B cell (primary cell): ENCODE measurements at regions of chr16 and their contacts with region 1.

Region 1: DNA sequence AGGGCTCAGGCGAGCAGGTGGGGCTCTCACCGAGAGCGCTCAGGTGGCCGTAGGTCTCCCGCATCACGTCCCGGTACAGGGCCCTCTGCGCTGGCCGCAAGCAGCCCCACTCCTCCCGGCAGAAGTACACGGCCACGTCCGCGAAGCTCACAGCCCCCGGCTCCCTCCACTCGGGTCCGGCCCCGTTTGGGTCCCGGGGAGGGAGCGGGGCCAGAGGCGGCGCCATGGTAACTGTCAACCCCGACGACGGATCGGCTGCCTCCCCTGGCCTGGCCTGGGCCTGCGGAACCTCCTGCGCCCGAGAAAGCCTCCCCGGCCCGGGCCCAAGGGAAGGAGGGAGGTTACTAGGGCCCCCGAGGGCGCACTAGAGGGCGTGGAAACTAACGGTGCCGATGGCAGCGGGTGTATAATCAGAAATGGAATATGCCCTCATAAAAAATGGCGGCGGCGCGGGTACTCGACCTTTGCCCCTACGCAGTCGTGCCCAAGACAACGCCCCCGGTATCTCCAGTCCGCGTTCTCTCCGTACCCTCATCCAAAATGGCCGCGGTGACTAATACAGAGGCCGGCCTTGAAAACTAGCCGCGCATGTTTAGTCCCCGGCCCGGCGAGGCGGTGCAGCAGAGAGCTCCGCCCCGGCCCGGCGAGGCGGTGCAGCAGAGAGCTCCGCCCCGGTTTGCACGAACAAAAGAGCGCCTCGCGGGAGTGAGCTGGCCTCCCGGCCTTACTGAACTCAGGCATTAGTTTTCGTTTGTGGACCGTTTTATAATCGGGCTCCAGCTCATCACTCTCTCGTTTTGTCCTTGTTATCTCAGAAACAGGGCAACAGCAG is at the start of gene ZNF764:
- DNase-seq: peak; percentile 97
- ATAC-seq: peak; percentile 92
- H3K4me3 ChIP-seq: peak within 1 kb of the TSS in 4 of 5 experiments; percentile 80 to 91 (median 88)
- H3K4me3 Mint-ChIP-seq: peak within 1 kb of the TSS; percentile 86
- H3K27ac ChIP-seq: peak within 1 kb of the TSS; percentile 95 to 97
- H3K27ac Mint-ChIP-seq: peak within 1 kb of the TSS; percentile 91
- H3K4me1 ChIP-seq: peaks cover 14 to 35% of the 10 kb centered on the region in 2 donors
- H3K4me1 Mint-ChIP-seq: peaks cover 42% of the 10 kb centered on the region
- H3K27me3 ChIP-seq: no peaks in the 10 kb centered on the region
- H3K27me3 Mint-ChIP-seq: no peaks in the 10 kb centered on the region
- CTCF ChIP-seq: no peak
- total RNA-seq, gene ZNF764: 19.7 and 20.9 TPM in 2 replicates

Region 2: DNA sequence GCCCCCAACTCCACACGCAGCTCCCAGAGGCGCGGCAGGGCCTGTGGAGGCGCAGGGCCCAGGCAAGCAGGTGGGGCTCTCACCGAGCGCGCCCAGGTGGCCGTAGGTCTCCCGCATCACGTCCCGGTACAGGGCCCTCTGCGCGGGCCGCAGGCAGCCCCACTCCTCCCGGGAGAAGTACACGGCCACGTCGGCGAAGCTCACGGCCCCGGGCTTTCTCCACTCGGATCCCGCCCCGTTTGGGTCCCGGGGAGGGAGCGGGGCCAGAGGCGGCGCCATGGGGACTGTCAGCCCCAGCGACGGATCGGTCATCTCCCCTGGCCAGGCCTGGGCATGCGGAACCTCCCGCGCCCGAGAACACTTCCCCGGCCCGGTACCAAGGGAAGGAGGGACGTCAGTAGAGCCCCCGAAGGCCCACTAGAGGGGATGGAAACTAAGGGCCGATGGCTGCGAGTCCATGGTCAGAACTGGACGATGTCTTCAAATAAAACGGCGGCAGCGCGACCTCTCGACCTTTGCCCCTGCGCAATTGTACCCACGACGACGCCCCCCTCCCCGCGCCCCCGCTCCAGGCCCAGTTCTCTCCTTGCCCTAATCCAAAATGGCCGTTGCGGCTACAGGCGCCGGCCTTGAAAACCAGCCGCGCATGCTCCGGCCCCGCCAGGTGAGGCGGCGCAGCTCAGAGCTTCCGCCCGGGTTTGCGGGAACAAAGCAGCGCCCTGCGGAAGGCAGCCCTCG is 23.6 kb before region 1 on chr16 and contains the start of gene ZNF747:
- CTCF ChIA-PET with region 1: interaction called, 53 read pairs
- POLR2A ChIA-PET with region 1: interaction called, 38 read pairs
- intact Hi-C with region 1: loop called (anchors 1 kb)
- DNase-seq: peak; percentile 93
- ATAC-seq: peak; percentile 82
- H3K4me3 ChIP-seq: peak within 1 kb of the TSS; percentile 80 to 93 (median 88)
- H3K4me3 Mint-ChIP-seq: peak within 1 kb of the TSS; percentile 98
- H3K27ac ChIP-seq: peak within 1 kb of the TSS; percentile 89 to 94
- H3K27ac Mint-ChIP-seq: peak within 1 kb of the TSS; percentile 94
- H3K4me1 ChIP-seq: peaks cover 8 to 23% of the 10 kb centered on the region in 2 donors
- H3K4me1 Mint-ChIP-seq: peaks cover 33% of the 10 kb centered on the region
- H3K27me3 ChIP-seq: no peaks in the 10 kb centered on the region
- H3K27me3 Mint-ChIP-seq: no peaks in the 10 kb centered on the region
- CTCF ChIP-seq: no peak
- total RNA-seq, gene ZNF747: 17.3 and 27.1 TPM in 2 replicates

Region 3: DNA sequence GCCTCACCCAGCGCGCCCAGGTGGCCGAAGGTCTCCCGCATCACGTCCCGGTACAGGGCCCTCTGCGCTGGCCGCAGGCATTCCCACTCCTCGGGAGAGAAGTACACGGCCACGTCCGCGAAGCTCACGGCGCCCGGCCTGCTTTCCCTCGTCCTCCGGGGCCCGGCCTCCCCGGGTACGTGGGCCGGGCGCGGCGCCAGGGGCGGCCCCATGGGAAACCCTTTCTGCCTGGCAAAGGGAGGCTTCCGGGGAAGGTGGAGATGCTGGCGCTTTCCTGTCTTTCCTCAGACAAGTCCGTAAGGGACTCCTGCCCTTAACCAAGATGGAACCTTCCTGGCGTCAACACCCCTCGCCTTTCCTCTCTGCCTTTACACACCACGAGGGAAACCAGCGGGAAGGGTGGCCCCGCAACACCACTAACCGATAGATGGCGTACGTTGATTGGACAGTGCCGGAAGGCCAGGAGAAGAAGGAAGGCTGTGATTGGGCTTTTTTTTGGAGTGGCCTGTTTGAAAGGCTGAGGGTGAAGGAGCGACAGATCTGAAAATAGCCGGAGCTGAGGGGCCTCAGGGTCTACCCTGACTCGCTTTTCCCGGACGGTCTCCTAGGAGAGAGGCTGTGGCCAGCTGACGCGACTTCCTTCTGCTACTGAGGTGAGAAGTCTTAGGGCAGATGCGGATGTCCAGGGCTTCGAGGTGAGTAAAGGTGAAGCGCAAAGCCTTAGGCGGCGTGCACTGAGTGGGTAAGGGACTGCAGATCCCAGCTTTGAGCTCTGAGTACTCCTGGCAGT is 27.4 kb after region 1 on chr16 and contains the start of gene ZNF785:
- CTCF ChIA-PET with region 1: interaction called, 8 read pairs
- POLR2A ChIA-PET with region 1: interaction called, 4 read pairs
- intact Hi-C with region 1: loop called (anchors 1 kb)
- DNase-seq: peak; percentile 95
- ATAC-seq: peak; percentile 99
- H3K4me3 ChIP-seq: peak within 1 kb of the TSS; percentile 56 to 89 (median 75)
- H3K4me3 Mint-ChIP-seq: peak within 1 kb of the TSS; percentile 85
- H3K27ac ChIP-seq: peak within 1 kb of the TSS; percentile 29 to 82
- H3K27ac Mint-ChIP-seq: peak within 1 kb of the TSS; percentile 71
- H3K4me1 ChIP-seq: peaks cover 8 to 21% of the 10 kb centered on the region in 2 donors
- H3K4me1 Mint-ChIP-seq: peaks cover 22% of the 10 kb centered on the region
- H3K27me3 ChIP-seq: no peaks in the 10 kb centered on the region
- H3K27me3 Mint-ChIP-seq: no peaks in the 10 kb centered on the region
- CTCF ChIP-seq: no peak
- total RNA-seq, gene ZNF785: 39.7 and 44.6 TPM in 2 replicates

Region 4: GRCh38 chr16:30602616-30603277 is 44.6 kb after region 1 on chr16:
- CTCF ChIA-PET with region 1: interaction called, 15 read pairs
- POLR2A ChIA-PET with region 1: no interaction called
- intact Hi-C with region 1: loop called (anchors 1 kb)
- DNase-seq: no peak
- ATAC-seq: no peak
- H3K4me3 ChIP-seq: no peak overlapping the region
- H3K4me3 Mint-ChIP-seq: no peak overlapping the region
- H3K27ac ChIP-seq: no peak overlapping the region
- H3K27ac Mint-ChIP-seq: no peak overlapping the region
- H3K4me1 ChIP-seq: no peaks in the 10 kb centered on the region
- H3K4me1 Mint-ChIP-seq: peaks cover 3% of the 10 kb centered on the region
- H3K27me3 ChIP-seq: no peaks in the 10 kb centered on the region
- H3K27me3 Mint-ChIP-seq: no peaks in the 10 kb centered on the region
- CTCF ChIP-seq: no peak

Region 5: GRCh38 chr16:30609926-30610839 is 52.0 kb after region 1 on chr16 and contains the start of gene ZNF689:
- CTCF ChIA-PET with region 1: interaction called, 7 read pairs
- POLR2A ChIA-PET with region 1: interaction called, 6 read pairs
- intact Hi-C with region 1: loop called (anchors 1 kb)
- DNase-seq: peak; percentile 97
- ATAC-seq: peak; percentile 88
- H3K4me3 ChIP-seq: peak within 1 kb of the TSS; percentile 84 to 98 (median 91)
- H3K4me3 Mint-ChIP-seq: peak within 1 kb of the TSS; percentile 98
- H3K27ac ChIP-seq: peak within 1 kb of the TSS; percentile 82 to 96
- H3K27ac Mint-ChIP-seq: peak within 1 kb of the TSS; percentile 96
- H3K4me1 ChIP-seq: peaks cover 14 to 24% of the 10 kb centered on the region in 2 donors
- H3K4me1 Mint-ChIP-seq: peaks cover 21% of the 10 kb centered on the region
- H3K27me3 ChIP-seq: no peaks in the 10 kb centered on the region
- H3K27me3 Mint-ChIP-seq: no peaks in the 10 kb centered on the region
- CTCF ChIP-seq: no peak
- total RNA-seq, gene ZNF689: 11.9 and 12.4 TPM in 2 replicates

Region 6: DNA sequence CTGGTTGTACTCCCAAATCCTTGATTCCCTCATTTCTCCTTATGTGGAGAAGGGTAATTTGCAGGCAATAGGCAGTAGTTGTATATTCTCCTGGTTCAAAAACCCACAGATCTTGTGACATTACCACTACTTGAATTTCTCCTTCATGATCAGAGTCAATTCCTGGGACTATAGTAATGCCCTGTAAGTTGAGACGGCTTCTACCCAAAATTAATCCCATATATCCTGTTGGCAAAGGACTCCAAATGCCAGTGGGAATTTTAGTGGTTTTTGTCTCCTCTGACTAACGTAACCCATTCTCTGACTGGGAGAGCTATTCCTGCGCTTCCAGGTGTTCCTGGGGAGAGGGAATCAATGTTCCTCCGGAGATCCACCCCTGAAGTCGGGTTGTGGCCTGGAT is 63.6 kb after region 1 on chr16:
- CTCF ChIA-PET with region 1: no interaction called
- POLR2A ChIA-PET with region 1: no interaction called
- intact Hi-C with region 1: no loop called
- DNase-seq: no peak
- ATAC-seq: no peak
- H3K4me3 ChIP-seq: no peak overlapping the region
- H3K4me3 Mint-ChIP-seq: no peak overlapping the region
- H3K27ac ChIP-seq: no peak overlapping the region
- H3K27ac Mint-ChIP-seq: no peak overlapping the region
- H3K4me1 ChIP-seq: no peaks in the 10 kb centered on the region
- H3K4me1 Mint-ChIP-seq: no peaks in the 10 kb centered on the region
- H3K27me3 ChIP-seq: no peaks in the 10 kb centered on the region
- H3K27me3 Mint-ChIP-seq: peaks cover 21% of the 10 kb centered on the region
- CTCF ChIP-seq: no peak

Region 7: GRCh38 chr16:30747799-30748634 is 189.8 kb after region 1 on chr16 and contains the start of gene PHKG2:
- CTCF ChIA-PET with region 1: no interaction called
- POLR2A ChIA-PET with region 1: no interaction called
- intact Hi-C with region 1: loop called (anchors 2 kb)
- DNase-seq: peak; percentile 98
- ATAC-seq: peak; percentile 99
- H3K4me3 ChIP-seq: peak within 1 kb of the TSS; percentile 22 to 84 (median 69)
- H3K4me3 Mint-ChIP-seq: peak within 1 kb of the TSS; percentile 92
- H3K27ac ChIP-seq: peak within 1 kb of the TSS; percentile 45 to 75
- H3K27ac Mint-ChIP-seq: peak within 1 kb of the TSS; percentile 93
- H3K4me1 ChIP-seq: peaks cover 3 to 5% of the 10 kb centered on the region in 2 donors
- H3K4me1 Mint-ChIP-seq: peaks cover 19% of the 10 kb centered on the region
- H3K27me3 ChIP-seq: no peaks in the 10 kb centered on the region
- H3K27me3 Mint-ChIP-seq: no peaks in the 10 kb centered on the region
- CTCF ChIP-seq: no peak
- total RNA-seq, gene PHKG2: 54.1 and 55.7 TPM in 2 replicates